ENCODE measurements at regions of chr12 and their contacts with region 1.

Region 1: GRCh38 chr12:98698603-98699463 is 53.7 kb downstream of the APAF1 start:
- DNase-seq: peak; percentile 47 to 54
- H3K4me3 ChIP-seq: no peak overlapping the region
- H3K4me3 Mint-ChIP-seq: no peak overlapping the region
- H3K27ac Mint-ChIP-seq: no peak overlapping the region
- H3K4me1 ChIP-seq: no peaks in the 10 kb centered on the region
- H3K4me1 Mint-ChIP-seq: no peaks in the 10 kb centered on the region
- H3K27me3 ChIP-seq: no peaks in the 10 kb centered on the region
- H3K27me3 Mint-ChIP-seq: no peaks in the 10 kb centered on the region
- CTCF ChIP-seq: peak; percentile 68 to 70

Region 2: DNA sequence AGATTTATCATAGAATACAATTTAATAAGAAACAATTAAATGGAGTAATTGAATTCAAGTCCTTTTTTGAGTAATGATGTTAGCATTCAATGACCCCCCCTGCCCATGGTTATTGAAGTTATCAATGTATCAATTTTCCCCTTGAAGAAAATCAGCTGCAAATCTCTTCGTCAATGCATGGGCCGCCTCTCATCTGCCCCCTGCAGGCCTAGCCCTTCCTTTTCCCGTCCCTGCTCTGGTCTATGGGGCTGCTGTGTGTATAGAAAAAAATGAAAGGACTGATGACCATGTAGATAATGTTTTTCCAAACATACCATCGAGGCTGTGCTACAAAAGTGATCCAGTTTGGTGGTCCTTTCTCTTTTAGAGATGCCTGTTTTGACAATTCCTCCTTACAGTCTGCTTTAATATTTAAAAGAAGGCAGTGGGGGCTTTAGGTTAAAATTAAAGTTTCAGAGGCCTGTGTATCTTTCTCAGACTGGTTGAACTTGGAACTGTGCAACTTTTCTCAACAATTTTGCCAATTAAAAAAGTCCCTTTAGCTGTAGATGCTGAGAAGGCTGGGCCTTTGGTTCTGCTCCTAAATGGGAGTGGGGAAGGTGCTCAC is 44.6 kb after region 1 on chr12:
- CTCF ChIA-PET with region 1: no interaction called
- POLR2A ChIA-PET with region 1: no interaction called
- intact Hi-C with region 1: loop called (anchors 1 kb)
- DNase-seq: peak in 1 of 2 experiments; percentile 58
- H3K4me3 ChIP-seq: no peak overlapping the region
- H3K4me3 Mint-ChIP-seq: no peak overlapping the region
- H3K27ac Mint-ChIP-seq: no peak overlapping the region
- H3K4me1 ChIP-seq: no peaks in the 10 kb centered on the region
- H3K4me1 Mint-ChIP-seq: peaks cover 6% of the 10 kb centered on the region
- H3K27me3 ChIP-seq: no peaks in the 10 kb centered on the region
- H3K27me3 Mint-ChIP-seq: peaks cover 32% of the 10 kb centered on the region
- CTCF ChIP-seq: peak; percentile 51 to 79

Region 3: GRCh38 chr12:98788396-98788795 is 89.6 kb after region 1 on chr12:
- CTCF ChIA-PET with region 1: no interaction called
- POLR2A ChIA-PET with region 1: no interaction called
- intact Hi-C with region 1: no loop called
- DNase-seq: no peak
- H3K4me3 ChIP-seq: no peak overlapping the region
- H3K4me3 Mint-ChIP-seq: no peak overlapping the region
- H3K27ac Mint-ChIP-seq: no peak overlapping the region
- H3K4me1 ChIP-seq: no peaks in the 10 kb centered on the region
- H3K4me1 Mint-ChIP-seq: no peaks in the 10 kb centered on the region
- H3K27me3 ChIP-seq: no peaks in the 10 kb centered on the region
- H3K27me3 Mint-ChIP-seq: peaks cover 19% of the 10 kb centered on the region
- CTCF ChIP-seq: no peak

Region 4: GRCh38 chr12:98799146-98799810 is 100.4 kb after region 1 on chr12:
- CTCF ChIA-PET with region 1: interaction called, 3 read pairs
- POLR2A ChIA-PET with region 1: no interaction called
- intact Hi-C with region 1: loop called (anchors 1 kb)
- DNase-seq: peak in 1 of 2 experiments; percentile 38
- H3K4me3 ChIP-seq: no peak overlapping the region
- H3K4me3 Mint-ChIP-seq: no peak overlapping the region
- H3K27ac Mint-ChIP-seq: no peak overlapping the region
- H3K4me1 ChIP-seq: no peaks in the 10 kb centered on the region
- H3K4me1 Mint-ChIP-seq: no peaks in the 10 kb centered on the region
- H3K27me3 ChIP-seq: no peaks in the 10 kb centered on the region
- H3K27me3 Mint-ChIP-seq: peaks cover 17% of the 10 kb centered on the region
- CTCF ChIP-seq: no peak

Region 5: GRCh38 chr12:98939350-98939749 is 240.5 kb after region 1 on chr12:
- CTCF ChIA-PET with region 1: no interaction called
- POLR2A ChIA-PET with region 1: no interaction called
- intact Hi-C with region 1: loop called (anchors 1 kb)
- DNase-seq: peak in 1 of 2 experiments; percentile 21
- H3K4me3 ChIP-seq: no peak overlapping the region
- H3K4me3 Mint-ChIP-seq: no peak overlapping the region
- H3K27ac Mint-ChIP-seq: no peak overlapping the region
- H3K4me1 ChIP-seq: no peaks in the 10 kb centered on the region
- H3K4me1 Mint-ChIP-seq: peaks cover 6% of the 10 kb centered on the region
- H3K27me3 ChIP-seq: no peaks in the 10 kb centered on the region; the same call in 1 of the 2 replicates
- H3K27me3 Mint-ChIP-seq: peaks cover 16% of the 10 kb centered on the region
- CTCF ChIP-seq: peak; percentile 32 to 53

Measured in Caco-2 (cell line).